ENCODE measurements at regions of chr2 and their contacts with region 1.

Region 1: GRCh38 chr2:23926750-23927571 is at the start of gene ATAD2B:
- DNase-seq: peak; percentile 93 to 97 (median 96)
- H3K4me3 ChIP-seq: peak within 1 kb of the TSS; percentile 79 to 95
- H3K4me3 Mint-ChIP-seq: peak within 1 kb of the TSS; percentile 93 to 99 (median 98)
- H3K27ac ChIP-seq: peak within 1 kb of the TSS; percentile 97
- H3K27ac Mint-ChIP-seq: peak within 1 kb of the TSS; percentile 98 to 100 (median 100)
- H3K4me1 ChIP-seq: peaks cover 47% of the 10 kb centered on the region
- H3K4me1 Mint-ChIP-seq: peaks cover 35 to 63% (median 44%) of the 10 kb centered on the region in 4 donors
- H3K27me3 ChIP-seq: no peaks in the 10 kb centered on the region
- H3K27me3 Mint-ChIP-seq: no peaks in the 10 kb centered on the region
- total RNA-seq, gene ATAD2B: 38.7 to 44.4 TPM

Region 2: DNA sequence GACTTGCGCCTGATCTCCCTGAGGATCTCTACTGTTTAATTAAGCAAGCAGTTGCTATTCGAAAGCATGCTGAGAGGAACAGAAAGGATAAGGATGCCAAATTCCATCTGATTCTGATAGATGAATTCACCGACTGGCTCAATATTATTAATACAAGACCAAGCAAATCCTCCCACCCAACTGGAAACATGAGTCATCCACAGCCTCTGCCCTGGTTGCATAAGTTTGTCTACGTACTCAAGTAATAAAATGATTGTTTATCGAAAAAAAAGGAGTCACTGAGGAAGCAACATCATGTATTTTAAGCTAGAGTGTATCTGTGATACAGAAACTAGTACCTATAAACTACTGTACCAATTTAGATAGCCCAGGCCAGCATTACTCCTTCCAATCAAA is 26.0 kb before region 1 on chr2:
- CTCF ChIA-PET with region 1: interaction called, 23 read pairs
- POLR2A ChIA-PET with region 1: interaction called, 11 read pairs
- intact Hi-C with region 1: no loop called
- DNase-seq: no peak
- H3K4me3 ChIP-seq: no peak overlapping the region
- H3K4me3 Mint-ChIP-seq: no peak overlapping the region
- H3K27ac ChIP-seq: no peak overlapping the region
- H3K27ac Mint-ChIP-seq: peak overlapping the region in 1 of 7 donors; percentile 2
- H3K4me1 ChIP-seq: peaks cover 14% of the 10 kb centered on the region
- H3K4me1 Mint-ChIP-seq: peaks cover 32 to 63% (median 49%) of the 10 kb centered on the region in 4 donors
- H3K27me3 ChIP-seq: no peaks in the 10 kb centered on the region
- H3K27me3 Mint-ChIP-seq: no peaks in the 10 kb centered on the region

Region 3: DNA sequence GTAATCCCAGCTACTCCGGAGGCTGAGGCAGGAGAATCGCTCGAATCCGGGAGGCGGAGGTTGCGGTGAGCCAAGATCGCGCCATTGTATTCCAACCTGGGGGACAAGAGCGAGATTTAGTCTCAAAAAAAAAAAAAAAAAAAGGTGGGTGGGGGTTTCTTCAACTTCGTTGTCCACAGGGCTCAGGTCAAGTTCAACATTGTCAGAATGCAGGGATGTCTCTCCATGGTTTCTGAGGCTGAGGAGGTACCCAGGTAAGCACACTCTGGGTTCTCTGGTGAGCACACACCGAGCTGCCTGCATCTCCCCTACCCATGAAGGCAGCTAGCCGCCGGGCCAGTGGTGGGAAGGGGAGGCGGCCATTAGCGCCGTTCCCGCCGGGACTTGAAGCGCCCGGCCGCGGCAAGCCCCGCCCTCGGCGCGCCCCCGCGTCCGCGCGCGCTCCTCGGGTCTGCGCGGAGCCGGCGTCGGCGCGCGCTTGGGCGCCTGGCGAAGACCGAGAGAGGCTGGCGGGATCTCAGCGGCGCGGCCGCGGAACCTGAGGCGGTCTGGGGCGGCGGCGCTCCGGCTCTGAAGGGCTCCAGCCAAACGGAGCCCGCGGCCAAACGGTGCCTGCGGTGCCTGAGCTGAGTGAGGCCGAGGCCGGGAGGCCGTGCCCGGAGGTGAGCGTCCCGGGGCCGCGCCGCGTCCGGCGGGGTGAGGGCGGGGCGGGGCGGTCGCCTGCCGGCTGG is 13.2 kb after region 1 on chr2 and contains the start of gene UBXN2A:
- CTCF ChIA-PET with region 1: interaction called, 64 read pairs
- POLR2A ChIA-PET with region 1: interaction called, 144 read pairs
- intact Hi-C with region 1: loop called (anchors 1 kb)
- DNase-seq: peak; percentile 69 to 82 (median 80)
- H3K4me3 ChIP-seq: peak within 1 kb of the TSS; percentile 76 to 81
- H3K4me3 Mint-ChIP-seq: peak within 1 kb of the TSS; percentile 90 to 97 (median 94)
- H3K27ac ChIP-seq: peak within 1 kb of the TSS; percentile 70
- H3K27ac Mint-ChIP-seq: peak within 1 kb of the TSS; percentile 90 to 96 (median 95)
- H3K4me1 ChIP-seq: peaks cover 25% of the 10 kb centered on the region
- H3K4me1 Mint-ChIP-seq: peaks cover 21 to 46% (median 30%) of the 10 kb centered on the region in 4 donors
- H3K27me3 ChIP-seq: peaks cover 4% of the 10 kb centered on the region
- H3K27me3 Mint-ChIP-seq: no peaks in the 10 kb centered on the region
- total RNA-seq, gene UBXN2A: 14.5 to 15.0 TPM

Region 4: GRCh38 chr2:24046930-24047702 is 120.2 kb after region 1 on chr2 and contains the start of gene WDCP:
- CTCF ChIA-PET with region 1: interaction called, 14 read pairs
- POLR2A ChIA-PET with region 1: interaction called, 70 read pairs
- intact Hi-C with region 1: loop called (anchors 1 kb)
- DNase-seq: peak; percentile 90 to 98 (median 92)
- H3K4me3 ChIP-seq: peak within 1 kb of the TSS; percentile 89 to 90
- H3K4me3 Mint-ChIP-seq: peak within 1 kb of the TSS; percentile 91 to 100 (median 96)
- H3K27ac ChIP-seq: peak within 1 kb of the TSS; percentile 65
- H3K27ac Mint-ChIP-seq: peak within 1 kb of the TSS; percentile 69 to 98 (median 93)
- H3K4me1 ChIP-seq: peaks cover 25% of the 10 kb centered on the region
- H3K4me1 Mint-ChIP-seq: peaks cover 16 to 28% (median 25%) of the 10 kb centered on the region in 4 donors
- H3K27me3 ChIP-seq: no peaks in the 10 kb centered on the region
- H3K27me3 Mint-ChIP-seq: peaks cover 0 to 1% of the 10 kb centered on the region in 2 donors
- total RNA-seq, gene WDCP: 17.5 to 20.5 TPM

Region 5: DNA sequence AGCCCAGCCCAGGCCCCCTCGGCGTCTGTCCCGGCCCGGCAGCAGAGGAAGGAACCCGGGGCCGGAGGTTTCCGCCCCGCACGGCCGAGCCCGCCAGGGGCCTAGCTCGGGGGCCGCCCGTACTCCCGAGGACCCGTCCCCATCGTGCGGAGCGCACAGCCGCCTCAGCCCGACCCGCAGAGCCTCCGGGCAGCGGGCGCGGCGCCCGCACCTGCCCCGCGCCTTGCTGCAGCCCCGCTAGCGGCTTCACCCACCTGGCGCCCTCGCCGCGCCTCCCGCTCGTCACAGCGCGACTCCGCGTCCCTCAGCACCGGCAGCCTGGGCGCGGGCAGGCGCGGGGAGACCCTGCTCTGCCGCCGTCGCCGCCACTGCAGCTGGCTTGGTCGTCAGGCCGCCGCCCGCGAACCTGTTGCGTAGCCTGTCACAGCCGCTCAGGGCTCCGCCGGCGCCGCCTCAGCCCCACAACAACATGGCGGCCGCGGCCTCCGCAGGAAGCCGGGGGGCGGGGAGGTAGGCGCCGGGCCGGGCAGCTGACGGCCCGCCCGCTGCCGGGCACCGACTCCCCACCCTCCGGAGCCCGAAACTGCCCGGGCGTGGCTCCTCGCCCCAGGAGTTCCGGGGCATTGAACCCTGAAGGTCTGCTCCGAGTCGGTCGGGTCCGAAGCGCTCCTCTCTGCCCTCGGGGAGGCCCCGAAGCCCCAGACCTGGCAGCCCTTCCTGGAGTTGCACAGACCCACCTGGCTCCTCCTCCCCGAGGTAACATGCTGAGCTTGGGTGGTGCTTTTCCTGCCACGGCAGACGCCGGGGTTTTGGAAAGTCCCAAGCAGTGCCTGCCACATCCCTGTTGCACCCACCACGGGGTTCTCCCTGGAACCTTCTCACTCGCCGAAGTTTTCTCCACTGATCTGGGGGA is 433.3 kb after region 1 on chr2 and contains the start of gene ITSN2:
- CTCF ChIA-PET with region 1: interaction called, 3 read pairs
- POLR2A ChIA-PET with region 1: interaction called, 20 read pairs
- intact Hi-C with region 1: loop called (anchors 5 kb)
- DNase-seq: peak; percentile 82 to 90 (median 86)
- H3K4me3 ChIP-seq: peak within 1 kb of the TSS; percentile 24 to 89
- H3K4me3 Mint-ChIP-seq: peak within 1 kb of the TSS; percentile 90 to 96 (median 94)
- H3K27ac ChIP-seq: peak within 1 kb of the TSS; percentile 96
- H3K27ac Mint-ChIP-seq: peak within 1 kb of the TSS; percentile 91 to 98 (median 96)
- H3K4me1 ChIP-seq: peaks cover 31% of the 10 kb centered on the region
- H3K4me1 Mint-ChIP-seq: peaks cover 18 to 41% (median 30%) of the 10 kb centered on the region in 4 donors
- H3K27me3 ChIP-seq: no peaks in the 10 kb centered on the region
- H3K27me3 Mint-ChIP-seq: no peaks in the 10 kb centered on the region
- total RNA-seq, gene ITSN2: 133 to 135 TPM

Region 6: GRCh38 chr2:24930768-24931167 is 1003.8 kb after region 1 on chr2:
- CTCF ChIA-PET with region 1: no interaction called
- POLR2A ChIA-PET with region 1: no interaction called
- intact Hi-C with region 1: no loop called
- DNase-seq: no peak
- H3K4me3 ChIP-seq: no peak overlapping the region
- H3K4me3 Mint-ChIP-seq: no peak overlapping the region
- H3K27ac ChIP-seq: no peak overlapping the region
- H3K27ac Mint-ChIP-seq: no peak overlapping the region
- H3K4me1 ChIP-seq: peaks cover 17% of the 10 kb centered on the region
- H3K4me1 Mint-ChIP-seq: peaks cover 0 to 5% (median 3%) of the 10 kb centered on the region in 4 donors
- H3K27me3 ChIP-seq: no peaks in the 10 kb centered on the region
- H3K27me3 Mint-ChIP-seq: no peaks in the 10 kb centered on the region